ENCODE measurements at regions of chr9 and their contacts with region 1.

Region 1: DNA sequence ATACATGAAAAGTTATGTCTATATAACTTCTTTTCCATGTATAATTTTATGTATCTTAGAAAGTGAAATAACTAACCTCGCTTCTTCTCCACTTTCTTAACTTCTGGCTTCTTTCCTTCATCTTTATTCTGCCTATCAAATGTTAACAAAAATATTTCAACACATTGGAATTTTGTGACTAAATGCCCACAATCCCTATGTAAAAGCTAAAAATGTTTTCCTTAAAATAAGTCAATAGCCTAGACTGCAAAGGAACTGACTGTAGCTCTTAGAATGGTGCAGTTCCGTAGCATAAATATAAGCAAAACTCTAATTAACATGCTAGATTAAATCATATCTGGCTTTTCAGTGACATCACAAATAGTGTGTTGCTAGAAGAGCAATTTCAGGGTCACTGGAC is 40.9 kb downstream of the PSIP1 start:
- DNase-seq: no peak
- ATAC-seq: no peak
- H3K4me3 Mint-ChIP-seq: no peak overlapping the region
- H3K27ac Mint-ChIP-seq: no peak overlapping the region
- H3K4me1 Mint-ChIP-seq: peaks cover 18% of the 10 kb centered on the region
- H3K27me3 Mint-ChIP-seq: no peaks in the 10 kb centered on the region

Region 2: DNA sequence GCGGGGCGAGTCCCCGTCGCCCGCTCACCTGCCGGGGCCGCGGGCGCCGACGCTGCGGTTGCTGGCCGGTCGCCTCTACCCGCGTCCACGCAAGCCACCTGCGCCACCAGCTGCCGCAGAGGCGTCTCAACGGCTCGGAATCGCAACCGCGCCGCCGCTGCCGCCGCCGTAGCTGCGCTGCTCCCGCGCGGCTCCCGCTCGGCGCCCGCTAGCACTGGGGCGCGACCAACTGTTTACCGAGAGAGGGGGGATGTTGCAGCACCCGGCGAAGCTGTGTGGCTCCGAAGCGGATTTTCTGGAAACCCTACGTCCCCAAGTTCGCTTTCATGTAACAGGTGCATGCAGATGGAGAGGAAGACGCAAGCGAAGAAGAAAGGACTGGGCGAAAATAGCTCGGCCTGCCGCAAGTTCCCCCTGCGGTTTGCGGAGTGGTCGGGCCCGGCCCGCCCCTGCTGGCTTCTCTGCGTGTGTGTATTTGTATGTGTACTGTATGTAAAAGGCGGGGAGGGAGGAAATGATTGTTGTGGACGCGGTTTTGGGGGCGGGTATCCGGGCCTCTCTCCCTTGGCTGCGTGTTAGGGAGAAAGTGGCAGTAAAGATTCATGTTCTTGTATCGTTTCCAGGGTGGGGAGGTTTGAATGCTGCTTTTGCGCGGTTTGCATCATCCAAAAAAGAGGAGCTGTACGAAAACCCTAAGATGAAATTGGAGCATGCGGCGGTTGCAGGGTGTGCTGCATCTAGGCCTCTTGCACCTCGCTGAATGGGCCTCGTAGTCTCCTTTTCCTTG is 41.1 kb after region 1 on chr9 and contains the start of gene PSIP1:
- CTCF ChIA-PET with region 1: interaction called, 3 read pairs
- POLR2A ChIA-PET with region 1: interaction called, 4 read pairs
- intact Hi-C with region 1: loop called in 1 of 2 experiments (anchors 5 kb)
- DNase-seq: peak; percentile 92
- ATAC-seq: peak; percentile 86
- H3K4me3 Mint-ChIP-seq: peak within 1 kb of the TSS; percentile 85
- H3K27ac Mint-ChIP-seq: peak within 1 kb of the TSS; percentile 98
- H3K4me1 Mint-ChIP-seq: peaks cover 48% of the 10 kb centered on the region
- H3K27me3 Mint-ChIP-seq: no peaks in the 10 kb centered on the region
- total RNA-seq, gene PSIP1: 139 to 189 TPM

Measured in activated CD4-positive, alpha-beta T cell treated with anti-CD3 and anti-CD28 coated beads for 36 hours (primary cell).